Activated naive CD8-positive, alpha-beta T cell treated with anti-CD3 and anti-CD28 coated beads, Interleukin-2, amount 10 ng/mL, durations not matched to agents 7 days and 5 days (primary cell): ENCODE measurements at regions of chr18 and their contacts with region 1.

Region 1: DNA sequence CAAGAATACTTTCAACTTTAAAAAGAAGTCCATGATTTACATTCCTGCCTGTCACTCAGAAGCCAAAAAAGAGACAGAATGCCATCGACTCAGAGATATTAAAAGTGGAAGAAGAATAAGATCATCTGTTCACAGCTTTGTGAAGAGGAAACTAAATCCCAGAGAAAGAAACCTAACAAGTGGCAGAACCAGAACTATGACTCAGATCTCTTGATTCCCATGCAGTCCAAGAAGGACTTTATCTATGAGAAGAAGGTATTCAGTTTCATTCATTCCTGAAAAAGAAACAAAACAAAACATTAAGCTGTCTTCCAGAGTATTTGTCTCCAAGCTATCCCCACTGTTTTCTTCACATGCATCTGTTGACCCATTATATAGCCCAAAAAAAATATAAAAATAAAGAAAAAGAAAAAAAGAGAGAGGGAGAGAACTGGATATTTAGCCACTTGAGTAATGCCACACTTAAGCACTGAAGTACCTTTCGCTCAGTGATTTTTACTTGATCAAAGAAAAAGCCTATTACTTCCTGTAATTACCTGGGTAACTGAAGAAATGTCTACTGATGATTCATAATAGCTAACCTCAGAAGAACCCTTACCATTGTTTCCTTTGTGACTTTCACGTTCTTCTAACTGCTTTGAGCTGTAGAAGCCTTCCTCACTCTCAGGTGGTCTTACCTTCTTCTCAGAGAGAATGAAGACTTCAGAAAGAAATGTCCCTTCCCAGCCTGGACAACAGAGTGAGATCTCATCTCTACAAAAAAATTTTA is 17.7 kb upstream of the AKAIN1 start:
- DNase-seq: no peak
- ATAC-seq: peak; percentile 78
- H3K4me3 Mint-ChIP-seq: peak overlapping the region; percentile 24
- H3K27ac Mint-ChIP-seq: no peak overlapping the region
- H3K4me1 Mint-ChIP-seq: peaks cover 15% of the 10 kb centered on the region
- H3K27me3 Mint-ChIP-seq: no peaks in the 10 kb centered on the region

Region 2: GRCh38 chr18:5237723-5238370 is 23.1 kb after region 1 on chr18:
- POLR2A ChIA-PET with region 1: interaction called, 20 read pairs
- DNase-seq: peak; percentile 95
- ATAC-seq: peak; percentile 94
- H3K4me3 Mint-ChIP-seq: peak overlapping the region; percentile 93
- H3K27ac Mint-ChIP-seq: peak overlapping the region; percentile 96
- H3K4me1 Mint-ChIP-seq: peaks cover 19% of the 10 kb centered on the region
- H3K27me3 Mint-ChIP-seq: no peaks in the 10 kb centered on the region